Caco-2 (cell line): ENCODE measurements at regions of chr1 and their contacts with region 1.

Region 1: GRCh38 chr1:201481761-201482493 is 12.9 kb upstream of the PHLDA3 start:
- DNase-seq: peak; percentile 87 to 92
- H3K4me3 ChIP-seq: peak overlapping the region; percentile 15
- H3K4me3 Mint-ChIP-seq: peak overlapping the region; percentile 68
- H3K27ac Mint-ChIP-seq: no peak overlapping the region
- H3K4me1 ChIP-seq: peaks cover 15% of the 10 kb centered on the region; the same call in 1 of the 2 replicates
- H3K4me1 Mint-ChIP-seq: peaks cover 4% of the 10 kb centered on the region
- H3K27me3 ChIP-seq: no peaks in the 10 kb centered on the region
- H3K27me3 Mint-ChIP-seq: no peaks in the 10 kb centered on the region
- CTCF ChIP-seq: peak; percentile 83 to 87

Region 2: DNA sequence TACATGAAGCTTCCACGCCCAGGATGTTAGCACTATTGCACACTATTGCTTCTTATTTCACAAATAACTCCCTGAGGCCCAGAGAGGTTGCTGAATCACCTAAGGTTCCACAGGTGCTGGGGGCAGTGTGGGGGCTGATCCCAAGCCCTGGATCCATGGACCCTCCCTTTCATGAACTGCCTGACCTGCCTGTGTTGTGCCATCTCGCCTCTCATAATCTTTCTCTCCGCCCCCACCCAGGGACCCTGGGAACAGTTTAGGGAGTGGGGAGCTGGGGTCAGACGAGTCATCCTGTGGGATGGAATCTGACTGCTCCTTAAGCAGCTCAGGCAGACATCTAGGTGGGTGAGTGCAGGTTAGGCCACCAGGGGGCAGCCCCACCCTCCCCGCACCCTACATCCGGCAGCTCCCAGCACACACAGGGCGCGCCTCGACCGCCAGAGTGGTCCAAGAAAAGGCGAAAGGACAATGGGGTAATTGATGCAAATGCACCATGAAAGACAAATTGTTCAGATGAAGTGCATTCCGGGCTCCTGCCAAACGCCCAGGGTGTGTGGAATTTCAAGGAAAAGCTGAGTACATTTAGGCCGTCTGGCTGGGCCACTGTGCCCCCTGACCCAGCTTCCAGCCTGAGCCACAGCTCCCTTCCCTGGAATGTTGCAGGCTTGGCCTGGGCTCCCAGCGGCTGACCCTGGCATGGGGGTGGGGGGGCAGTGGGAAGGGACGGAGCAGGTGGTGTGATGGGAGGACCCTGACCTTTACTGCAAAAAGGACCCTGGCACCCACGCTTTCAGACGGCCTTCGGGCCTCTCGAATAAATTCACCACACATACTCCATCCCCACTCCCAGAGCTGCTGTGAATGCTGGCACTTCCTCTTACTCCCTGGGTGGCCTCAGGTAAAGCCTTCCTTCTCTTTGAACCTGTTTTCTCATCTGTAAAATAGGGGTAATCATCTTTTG is 33.7 kb before region 1 on chr1:
- CTCF ChIA-PET with region 1: interaction called, 98 read pairs
- POLR2A ChIA-PET with region 1: interaction called, 4 read pairs
- intact Hi-C with region 1: loop called (anchors 1 kb)
- DNase-seq: peak; percentile 65 to 67
- H3K4me3 ChIP-seq: no peak overlapping the region
- H3K4me3 Mint-ChIP-seq: no peak overlapping the region
- H3K27ac Mint-ChIP-seq: no peak overlapping the region
- H3K4me1 ChIP-seq: no peaks in the 10 kb centered on the region
- H3K4me1 Mint-ChIP-seq: no peaks in the 10 kb centered on the region
- H3K27me3 ChIP-seq: no peaks in the 10 kb centered on the region
- H3K27me3 Mint-ChIP-seq: peaks cover 2% of the 10 kb centered on the region
- CTCF ChIP-seq: peak; percentile 82 to 88

Region 3: GRCh38 chr1:201495471-201496295 is 13.8 kb after region 1 on chr1:
- CTCF ChIA-PET with region 1: interaction called, 46 read pairs
- POLR2A ChIA-PET with region 1: no interaction called
- intact Hi-C with region 1: no loop called
- DNase-seq: no peak
- H3K4me3 ChIP-seq: no peak overlapping the region
- H3K4me3 Mint-ChIP-seq: no peak overlapping the region
- H3K27ac Mint-ChIP-seq: no peak overlapping the region
- H3K4me1 ChIP-seq: peaks cover 21% of the 10 kb centered on the region
- H3K4me1 Mint-ChIP-seq: peaks cover 18% of the 10 kb centered on the region
- H3K27me3 ChIP-seq: no peaks in the 10 kb centered on the region
- H3K27me3 Mint-ChIP-seq: no peaks in the 10 kb centered on the region
- CTCF ChIP-seq: no peak

Region 4: DNA sequence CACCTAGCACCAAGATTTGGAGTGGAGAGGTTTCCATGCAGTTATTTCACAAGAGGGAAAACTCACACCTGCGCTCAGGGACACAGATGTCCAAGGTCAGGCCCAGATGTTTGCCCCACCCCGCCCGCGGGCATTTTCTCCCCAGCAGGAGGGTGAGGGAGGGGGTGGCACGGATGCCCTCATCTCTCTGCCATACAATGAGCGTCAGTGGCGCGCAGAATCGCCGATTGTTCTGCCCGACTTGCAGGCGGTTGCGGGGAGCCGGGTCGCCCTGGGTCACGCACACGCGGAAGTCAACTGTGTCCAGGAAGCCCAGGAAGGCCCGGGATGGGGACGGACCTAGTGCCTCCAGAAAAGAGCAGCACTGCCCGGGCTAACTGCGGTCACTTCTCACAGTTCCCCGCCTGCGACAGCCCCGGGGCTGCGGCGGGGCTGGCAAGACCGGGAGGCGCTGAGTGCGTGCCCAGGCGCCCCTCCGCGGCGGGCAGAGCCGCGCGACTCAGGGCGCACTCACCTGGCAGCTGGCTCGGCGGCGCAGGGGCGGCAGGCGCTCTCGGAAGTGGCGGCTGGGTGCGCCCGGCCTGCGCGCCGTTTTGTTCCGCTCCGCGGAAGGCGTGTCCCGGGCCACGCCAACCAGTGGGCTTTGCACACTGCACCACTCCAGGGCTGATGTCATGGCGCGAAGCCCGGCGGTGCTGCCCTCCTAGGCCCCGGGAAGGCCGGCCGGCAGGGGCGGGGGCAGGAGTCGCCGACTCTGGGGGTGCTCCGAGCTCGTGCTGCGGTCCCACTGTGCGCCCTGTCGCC is 24.8 kb after region 1 on chr1 and contains the start of gene CSRP1:
- CTCF ChIA-PET with region 1: interaction called, 198 read pairs
- POLR2A ChIA-PET with region 1: interaction called, 20 read pairs
- intact Hi-C with region 1: no loop called
- DNase-seq: peak; percentile 72 to 78
- H3K4me3 ChIP-seq: peak within 1 kb of the TSS; percentile 60
- H3K4me3 Mint-ChIP-seq: peak within 1 kb of the TSS; percentile 82
- H3K27ac Mint-ChIP-seq: peak within 1 kb of the TSS; percentile 80
- H3K4me1 ChIP-seq: peaks cover 50% of the 10 kb centered on the region
- H3K4me1 Mint-ChIP-seq: peaks cover 31% of the 10 kb centered on the region
- H3K27me3 ChIP-seq: no peaks in the 10 kb centered on the region
- H3K27me3 Mint-ChIP-seq: no peaks in the 10 kb centered on the region
- CTCF ChIP-seq: no peak
- total RNA-seq, gene CSRP1: 60.0 and 60.8 TPM in 2 replicates

Region 5: DNA sequence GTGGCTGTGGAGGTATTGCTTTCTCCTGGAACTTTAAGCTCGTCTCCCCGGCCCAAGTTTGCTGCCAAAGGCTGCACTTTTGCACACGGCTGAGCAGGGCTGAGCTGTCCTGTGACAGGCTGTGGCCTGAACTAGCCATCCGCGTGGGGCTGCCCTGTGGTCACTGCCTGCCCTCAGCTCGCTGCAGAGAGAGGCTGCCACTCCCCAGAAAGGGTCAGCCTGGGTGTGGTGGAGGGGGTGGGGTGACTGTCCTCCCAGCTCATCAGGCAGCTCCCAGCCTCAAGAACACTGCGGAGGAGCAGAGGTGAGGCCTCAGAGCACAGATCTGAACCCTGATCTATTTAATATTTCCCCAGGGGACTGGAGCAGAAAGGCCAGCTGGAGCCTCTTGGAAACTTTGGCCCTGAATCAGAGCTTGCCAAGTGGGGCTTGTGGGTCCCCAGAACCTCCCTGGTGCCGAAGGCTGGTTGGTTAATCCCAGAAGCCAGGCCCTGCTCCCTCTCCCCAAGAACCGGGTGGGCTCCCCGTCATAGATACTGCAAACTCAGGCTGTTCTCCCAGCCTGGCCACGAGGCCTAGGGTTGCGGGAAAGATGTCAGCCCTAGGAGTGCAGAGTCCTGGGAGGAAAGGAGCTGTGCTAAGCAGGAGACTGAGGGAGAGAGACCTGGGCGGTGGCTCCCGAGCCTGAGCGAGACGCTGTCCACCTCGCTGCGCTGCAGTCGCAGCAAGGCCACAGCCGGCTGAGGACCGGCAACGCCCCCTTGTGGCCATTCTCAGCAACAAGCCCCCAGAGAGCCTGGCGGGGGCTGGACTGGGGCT is 221.9 kb after region 1 on chr1:
- CTCF ChIA-PET with region 1: no interaction called
- POLR2A ChIA-PET with region 1: no interaction called
- intact Hi-C with region 1: loop called (anchors 5 kb)
- DNase-seq: peak; percentile 77 to 87
- H3K4me3 ChIP-seq: no peak overlapping the region
- H3K4me3 Mint-ChIP-seq: no peak overlapping the region
- H3K27ac Mint-ChIP-seq: no peak overlapping the region
- H3K4me1 ChIP-seq: no peaks in the 10 kb centered on the region
- H3K4me1 Mint-ChIP-seq: no peaks in the 10 kb centered on the region
- H3K27me3 ChIP-seq: no peaks in the 10 kb centered on the region
- H3K27me3 Mint-ChIP-seq: peaks cover 3% of the 10 kb centered on the region
- CTCF ChIP-seq: peak; percentile 93